Aorta (tissue), 5 donors: ENCODE measurements at regions of chr12 and their contacts with region 1.

Region 1: GRCh38 chr12:12266873-12267741 is at the start of gene LRP6:
- DNase-seq: peak; percentile 94 to 96
- ATAC-seq: peak; percentile 98
- H3K4me3 ChIP-seq: peak within 1 kb of the TSS; percentile 82 to 89
- H3K27ac ChIP-seq: peak within 1 kb of the TSS; percentile 50 to 100
- H3K4me1 ChIP-seq: no peaks in the 10 kb centered on the region
- H3K27me3 ChIP-seq: no peaks in the 10 kb centered on the region
- total RNA-seq, gene LRP6: 36.5 to 57.0 TPM

Region 2: GRCh38 chr12:12182703-12183365 is 84.3 kb before region 1 on chr12:
- intact Hi-C with region 1: loop called in 1 of 2 experiments (anchors 10 kb)
- DNase-seq: no peak
- ATAC-seq: no peak
- H3K4me3 ChIP-seq: no peak overlapping the region
- H3K27ac ChIP-seq: peak overlapping the region; percentile 59 to 76
- H3K4me1 ChIP-seq: peaks cover 2 to 8% of the 10 kb centered on the region in 2 donors
- H3K27me3 ChIP-seq: no peaks in the 10 kb centered on the region

Region 3: DNA sequence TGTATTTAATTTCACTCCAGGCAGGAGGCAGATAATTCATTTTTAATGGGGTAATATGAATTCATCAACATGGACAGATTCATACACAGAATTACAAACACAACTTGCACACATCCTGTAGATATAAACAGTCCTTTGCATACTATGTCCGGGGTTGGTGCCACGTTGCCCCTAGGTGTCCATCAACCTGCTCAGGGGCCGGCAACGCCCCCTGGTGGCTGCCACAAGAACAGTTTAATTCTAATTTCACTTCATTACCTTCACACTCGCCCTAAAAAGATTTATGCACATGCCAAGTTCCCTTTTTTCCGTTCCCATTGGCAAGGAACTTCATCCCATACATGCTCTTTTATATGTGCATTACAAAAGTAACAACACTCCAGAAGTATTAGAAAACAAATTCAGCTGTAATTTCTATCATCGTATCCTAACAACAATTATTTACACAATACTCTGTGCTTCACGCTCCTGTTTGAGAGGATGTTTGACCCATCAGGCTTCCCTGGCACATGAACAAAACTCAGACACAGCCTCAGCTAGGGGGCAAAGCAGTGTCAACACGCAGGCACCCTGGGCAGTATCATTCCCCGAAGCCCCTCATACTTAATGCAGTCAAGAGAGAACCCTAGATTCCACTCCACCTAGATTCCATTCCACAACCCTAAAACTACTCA is 67.4 kb after region 1 on chr12:
- intact Hi-C with region 1: loop called (anchors 5 to 10 kb)
- DNase-seq: peak; percentile 53 to 82
- ATAC-seq: peak; percentile 73
- H3K4me3 ChIP-seq: no peak overlapping the region
- H3K27ac ChIP-seq: peak overlapping the region in 1 of 2 donors; percentile 32
- H3K4me1 ChIP-seq: peaks cover 2 to 6% of the 10 kb centered on the region in 2 donors
- H3K27me3 ChIP-seq: no peaks in the 10 kb centered on the region